ENCODE measurements at regions of chr12 and their contacts with region 1.

Region 1: DNA sequence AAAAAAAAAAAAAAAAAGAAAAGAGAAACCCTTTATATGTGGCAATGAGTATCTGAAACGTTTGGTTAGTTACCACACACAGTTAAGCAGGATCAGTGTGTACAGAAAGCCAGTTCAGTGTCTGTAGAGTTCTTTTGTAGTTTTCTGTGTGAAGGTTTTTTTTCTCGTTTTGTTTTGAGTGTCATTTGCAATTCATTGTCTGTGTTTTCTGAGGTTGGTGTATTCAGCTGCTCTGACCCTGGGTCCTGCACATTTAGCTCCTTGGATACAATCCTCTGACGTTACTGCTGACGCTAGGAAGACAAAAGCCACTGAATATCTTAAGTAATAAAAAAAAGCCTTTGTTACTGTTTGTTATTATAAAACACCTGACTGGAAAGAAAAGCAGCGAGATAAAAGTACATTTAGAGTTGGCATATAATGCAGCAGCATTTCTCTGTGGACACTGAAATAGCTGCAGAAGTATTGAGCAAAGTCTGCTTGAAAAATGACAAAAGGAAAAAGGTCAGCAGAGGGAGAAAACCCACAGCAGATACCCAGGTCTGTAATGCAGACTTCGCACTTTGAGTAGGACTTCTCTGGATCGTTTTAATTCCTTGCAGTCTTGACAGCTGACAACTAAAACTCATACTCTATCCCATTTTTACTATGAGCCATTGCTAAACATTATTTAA is 89.0 kb downstream of the POLR3B start:
- DNase-seq: no peak
- CTCF ChIP-seq: no peak

Region 2: GRCh38 chr12:106078358-106079010 is 368.1 kb before region 1 on chr12:
- CTCF ChIA-PET with region 1: no interaction called
- POLR2A ChIA-PET with region 1: no interaction called
- DNase-seq: no peak
- CTCF ChIP-seq: no peak

Region 3: DNA sequence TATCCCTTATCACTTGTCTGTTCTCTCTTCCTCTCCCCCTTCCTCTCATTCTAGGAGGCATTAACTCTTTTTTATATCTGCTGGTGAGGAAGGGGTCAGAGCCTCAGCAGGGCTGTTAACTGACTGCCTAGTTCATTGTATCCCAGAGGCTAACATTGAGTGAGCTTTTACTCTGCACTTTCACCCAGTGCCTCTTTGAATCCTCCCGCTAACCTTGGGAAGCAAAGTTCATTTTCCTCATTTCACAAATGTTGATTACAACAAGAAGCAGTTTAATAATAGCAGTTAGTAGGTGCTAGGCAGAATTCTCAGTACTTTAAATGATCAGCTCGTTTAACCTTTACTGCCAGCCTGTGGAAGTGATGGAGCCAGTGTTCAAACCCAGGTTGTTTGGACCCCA is 13.5 kb before region 1 on chr12:
- CTCF ChIA-PET with region 1: interaction called, 14 read pairs
- POLR2A ChIA-PET with region 1: no interaction called
- DNase-seq: no peak
- CTCF ChIP-seq: no peak

Region 4: GRCh38 chr12:106459124-106459523 is 12.6 kb after region 1 on chr12:
- CTCF ChIA-PET with region 1: interaction called, 10 read pairs
- POLR2A ChIA-PET with region 1: no interaction called
- DNase-seq: no peak
- CTCF ChIP-seq: no peak

Region 5: DNA sequence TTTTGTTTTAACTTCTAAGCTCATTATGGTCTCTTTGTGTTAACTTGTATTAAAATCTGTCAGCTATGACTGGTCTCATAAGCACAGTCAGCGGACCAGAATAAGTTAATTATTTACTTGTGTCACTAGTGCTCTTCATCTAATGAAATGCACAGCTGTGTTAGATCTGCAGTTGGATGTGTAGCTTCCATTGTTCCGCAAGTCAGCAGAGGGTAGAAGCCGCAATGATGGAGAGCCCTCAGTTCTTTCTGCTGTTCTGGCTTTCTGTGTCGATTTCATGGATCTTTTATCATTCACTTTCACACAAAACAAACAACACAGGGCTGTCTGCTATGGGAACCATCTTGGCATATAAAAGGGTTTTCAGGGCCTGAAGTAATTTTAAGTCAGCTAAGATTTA is 47.0 kb after region 1 on chr12:
- CTCF ChIA-PET with region 1: no interaction called
- POLR2A ChIA-PET with region 1: no interaction called
- DNase-seq: no peak
- CTCF ChIP-seq: no peak